ENCODE measurements at regions of chr6 and their contacts with region 1.

Region 1: GRCh38 chr6:126804332-126805064 is 314.0 kb upstream of the RSPO3 start:
- DNase-seq: peak; percentile 35
- ATAC-seq: peak; percentile 84
- H3K4me3 ChIP-seq: no peak overlapping the region
- H3K27ac ChIP-seq: no peak overlapping the region
- H3K4me1 ChIP-seq: no peaks in the 10 kb centered on the region
- H3K27me3 ChIP-seq: no peaks in the 10 kb centered on the region
- CTCF ChIP-seq: peak; percentile 78

Region 2: GRCh38 chr6:127190552-127190951 is 386.1 kb after region 1 on chr6:
- CTCF ChIA-PET with region 1: no interaction called
- POLR2A ChIA-PET with region 1: no interaction called
- in situ Hi-C with region 1: no loop called
- intact Hi-C with region 1: loop called (anchors 10 kb)
- DNase-seq: no peak
- ATAC-seq: no peak
- H3K4me3 ChIP-seq: no peak overlapping the region
- H3K27ac ChIP-seq: no peak overlapping the region
- H3K4me1 ChIP-seq: no peaks in the 10 kb centered on the region
- H3K27me3 ChIP-seq: no peaks in the 10 kb centered on the region
- CTCF ChIP-seq: peak; percentile 75; the same call in 1 of the 2 replicates